SK-N-SH (cell line): ENCODE measurements at regions of chr1 and their contacts with region 1.

Region 1: DNA sequence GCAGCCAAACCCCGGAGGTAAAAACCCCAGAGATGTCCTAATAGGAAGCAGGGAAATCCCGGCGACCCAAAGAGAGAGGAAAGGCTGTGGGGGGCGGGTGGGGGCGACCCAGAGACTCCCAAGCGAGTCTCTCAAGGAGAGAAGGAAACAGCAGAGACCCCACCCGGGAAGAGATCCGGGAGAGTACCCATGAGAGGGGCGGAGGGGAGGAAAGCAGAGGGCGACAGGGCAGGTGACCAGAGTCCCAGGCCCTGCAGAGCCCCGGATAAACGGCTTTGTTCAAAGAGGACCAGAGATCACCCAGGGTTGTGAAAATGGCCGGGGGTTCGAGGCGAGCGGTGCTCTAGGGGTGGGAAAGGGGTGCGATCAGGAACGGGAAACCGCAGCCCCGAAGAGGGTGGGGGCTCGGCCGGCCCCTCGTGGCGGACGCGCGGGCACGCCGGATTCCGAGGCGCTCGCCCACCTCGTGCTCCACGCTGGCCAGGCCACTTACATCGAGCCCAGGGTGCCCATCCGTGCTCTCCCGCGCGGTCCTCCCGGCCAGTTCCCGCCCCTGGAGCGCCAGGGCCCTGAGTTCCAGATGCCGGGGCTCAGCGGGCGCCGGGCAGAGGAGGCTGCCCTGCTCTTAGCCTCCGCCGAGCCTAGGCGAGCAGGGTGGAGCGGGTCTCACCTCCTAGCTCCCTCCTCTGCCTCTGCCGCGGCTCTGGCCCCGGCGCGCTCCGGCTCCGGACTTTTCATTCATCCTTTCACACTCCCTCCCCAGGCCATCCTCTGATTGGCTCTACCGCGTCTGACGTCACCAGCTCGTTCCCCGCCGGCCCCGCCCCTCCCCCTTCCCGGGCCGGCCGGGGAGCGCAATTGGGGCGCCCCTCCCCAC is 52.3 kb downstream of the RHBG start:
- DNase-seq: peak; percentile 98
- H3K4me3 ChIP-seq: peak overlapping the region; percentile 10 to 48; a peak in 3 of 4 replicates
- H3K27ac ChIP-seq: peak overlapping the region in 1 of 2 experiments; percentile 34; a peak in 1 of 4 replicates
- H3K4me1 ChIP-seq: peaks cover 11 to 28% of the 10 kb centered on the region in 2 experiments; a peak in 3 of 4 replicates
- H3K27me3 ChIP-seq: peaks cover 53% of the 10 kb centered on the region
- CTCF ChIP-seq: no peak
- EP300 ChIP-seq: no peak
- RAD21 ChIP-seq: no peak

Region 2: GRCh38 chr1:156368889-156369684 is 52.2 kb before region 1 on chr1 and contains the start of gene RHBG:
- CTCF ChIA-PET with region 1: no interaction called
- POLR2A ChIA-PET with region 1: no interaction called
- DNase-seq: no peak
- H3K4me3 ChIP-seq: no peak within 1 kb of the TSS
- H3K27ac ChIP-seq: peak within 1 kb of the TSS in 1 of 2 experiments; percentile 64; a peak in 2 of 4 replicates
- H3K4me1 ChIP-seq: peaks cover 0 to 17% of the 10 kb centered on the region in 2 experiments; a peak in 1 of 4 replicates
- H3K27me3 ChIP-seq: no peaks in the 10 kb centered on the region
- CTCF ChIP-seq: no peak
- EP300 ChIP-seq: no peak
- RAD21 ChIP-seq: no peak
- polyA plus RNA-seq, gene RHBG: 0.18 TPM in 1 of 2 replicates, not detected in the other

Region 3: DNA sequence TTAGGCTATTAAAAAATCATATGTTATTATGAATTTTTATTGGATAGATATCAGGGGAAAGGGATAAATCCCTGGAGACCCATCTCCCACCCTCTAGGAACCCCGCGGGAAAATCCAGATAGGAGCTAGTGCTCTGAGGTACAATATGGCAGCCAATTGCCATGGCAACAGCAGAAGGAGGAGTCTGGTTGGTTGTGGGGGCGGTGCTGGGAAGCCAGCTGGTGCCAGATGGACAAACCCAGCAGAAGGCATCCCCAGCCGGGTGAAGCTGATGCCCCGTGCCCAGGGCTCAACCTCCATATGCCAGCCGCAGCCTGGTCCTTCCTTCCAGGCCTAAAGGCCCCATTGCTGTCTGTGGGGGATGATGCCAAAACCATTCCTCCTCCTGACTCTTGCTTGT is 14.0 kb before region 1 on chr1:
- CTCF ChIA-PET with region 1: interaction called, 20 read pairs
- POLR2A ChIA-PET with region 1: interaction called, 3 read pairs
- DNase-seq: peak; percentile 59
- H3K4me3 ChIP-seq: no peak overlapping the region
- H3K27ac ChIP-seq: no peak overlapping the region
- H3K4me1 ChIP-seq: no peaks in the 10 kb centered on the region
- H3K27me3 ChIP-seq: peaks cover 14% of the 10 kb centered on the region; the same call in 1 of the 2 replicates
- CTCF ChIP-seq: no peak
- EP300 ChIP-seq: no peak
- RAD21 ChIP-seq: no peak

Region 4: DNA sequence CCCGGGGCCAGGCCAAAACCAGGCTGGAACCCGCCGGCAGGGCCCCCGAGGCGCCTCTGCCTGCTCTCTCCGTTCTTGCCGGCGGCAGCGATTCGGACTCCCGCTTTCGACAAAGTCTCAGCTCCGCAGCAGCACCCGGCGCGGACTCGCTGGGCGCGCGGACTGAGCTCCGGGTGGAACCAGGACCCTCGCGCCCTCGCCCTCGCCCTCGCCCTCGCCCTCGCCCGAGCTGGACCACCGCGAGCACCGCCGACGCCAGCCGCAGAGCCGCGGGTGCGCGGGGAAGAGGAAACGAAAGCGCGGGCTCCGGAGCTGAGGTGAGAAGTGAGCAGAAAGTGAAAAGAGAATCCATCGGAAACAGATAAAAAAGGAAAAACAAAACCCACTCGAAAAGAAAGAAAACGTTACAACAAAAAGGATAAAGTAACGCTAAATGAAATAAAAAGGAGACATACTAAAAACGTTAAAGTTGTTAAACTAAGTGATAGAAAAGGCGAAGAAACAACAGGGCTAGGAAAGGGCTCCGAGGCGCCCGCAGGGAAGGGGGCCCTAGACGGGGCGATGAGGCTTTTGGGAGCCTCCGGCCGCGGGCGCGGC is 14.3 kb after region 1 on chr1:
- CTCF ChIA-PET with region 1: interaction called, 25 read pairs
- POLR2A ChIA-PET with region 1: no interaction called
- DNase-seq: no peak
- H3K4me3 ChIP-seq: peak overlapping the region in 1 of 2 experiments; percentile 29; a peak in 2 of 4 replicates
- H3K27ac ChIP-seq: no peak overlapping the region
- H3K4me1 ChIP-seq: no peaks in the 10 kb centered on the region; a peak in 1 of 4 replicates
- H3K27me3 ChIP-seq: peaks cover 66% of the 10 kb centered on the region
- CTCF ChIP-seq: no peak
- EP300 ChIP-seq: no peak
- RAD21 ChIP-seq: no peak

Region 5: GRCh38 chr1:156492591-156493080 is 71.3 kb after region 1 on chr1:
- CTCF ChIA-PET with region 1: no interaction called
- POLR2A ChIA-PET with region 1: no interaction called
- DNase-seq: no peak
- H3K4me3 ChIP-seq: no peak overlapping the region
- H3K27ac ChIP-seq: no peak overlapping the region
- H3K4me1 ChIP-seq: peaks cover 47 to 76% of the 10 kb centered on the region in 2 experiments
- H3K27me3 ChIP-seq: no peaks in the 10 kb centered on the region
- CTCF ChIP-seq: no peak
- EP300 ChIP-seq: no peak
- RAD21 ChIP-seq: no peak